GM12878 (cell line): ENCODE measurements at regions of chr9 and their contacts with region 1.

Region 1: DNA sequence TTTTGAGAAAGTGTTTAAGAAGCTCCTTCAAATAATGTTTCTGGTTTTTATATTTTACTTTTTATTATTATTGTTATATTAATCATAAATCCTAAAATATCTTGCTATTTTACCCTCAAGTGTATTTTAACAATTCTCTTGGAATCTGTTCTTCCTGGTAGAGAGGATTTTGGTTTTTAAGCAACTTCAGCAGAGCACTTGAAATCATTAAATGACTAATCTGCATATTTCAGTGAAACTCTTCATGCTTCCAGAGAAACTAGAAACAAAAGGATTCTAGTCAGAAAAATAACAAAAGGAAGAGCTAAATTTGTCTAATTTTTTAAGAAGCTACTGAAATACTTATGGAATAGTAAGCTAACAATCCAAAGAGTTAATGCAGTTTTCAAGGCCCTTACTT is 1057.3 kb downstream of the TLE1 start:
- DNase-seq: no peak
- ATAC-seq: no peak
- H3K4me3 ChIP-seq: no peak overlapping the region
- H3K27ac ChIP-seq: no peak overlapping the region
- H3K4me1 ChIP-seq: no peaks in the 10 kb centered on the region
- H3K27me3 ChIP-seq: no peaks in the 10 kb centered on the region
- CTCF ChIP-seq: no peak
- EP300 ChIP-seq: no peak
- POLR2A ChIP-seq: no peak
- RAD21 ChIP-seq: no peak

Region 2: GRCh38 chr9:80571965-80572364 is 60.1 kb before region 1 on chr9:
- CTCF ChIA-PET with region 1: no interaction called
- POLR2A ChIA-PET with region 1: no interaction called
- RAD21 ChIA-PET with region 1: no interaction called
- SMC1A ChIA-PET with region 1: no interaction called
- in situ Hi-C with region 1: no loop called
- intact Hi-C with region 1: loop called (anchors 5 kb)
- DNase-seq: no peak
- ATAC-seq: no peak
- H3K4me3 ChIP-seq: no peak overlapping the region
- H3K27ac ChIP-seq: no peak overlapping the region
- H3K4me1 ChIP-seq: no peaks in the 10 kb centered on the region
- H3K27me3 ChIP-seq: no peaks in the 10 kb centered on the region
- CTCF ChIP-seq: no peak
- EP300 ChIP-seq: no peak
- POLR2A ChIP-seq: no peak
- RAD21 ChIP-seq: no peak

Region 3: DNA sequence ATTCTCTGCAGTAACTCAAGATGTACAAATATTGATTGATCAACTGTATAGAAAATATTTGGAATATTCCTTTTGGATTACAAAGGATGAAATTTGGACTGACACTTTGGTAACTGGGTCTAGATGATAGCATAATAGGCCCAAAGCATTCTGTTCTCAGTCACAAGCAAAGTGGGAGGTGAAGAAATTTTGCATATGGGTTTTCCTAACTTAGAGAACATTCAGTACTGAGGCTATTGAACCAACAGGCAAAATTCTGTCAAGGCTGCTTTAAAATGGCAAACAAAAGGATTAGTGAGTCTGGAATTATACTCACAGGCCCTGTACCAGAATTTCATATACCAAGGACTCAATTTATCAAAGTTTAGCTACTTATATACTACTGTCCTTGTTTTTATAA is 39.6 kb before region 1 on chr9:
- CTCF ChIA-PET with region 1: interaction called, 4 read pairs
- POLR2A ChIA-PET with region 1: no interaction called
- RAD21 ChIA-PET with region 1: no interaction called
- SMC1A ChIA-PET with region 1: no interaction called
- in situ Hi-C with region 1: no loop called
- intact Hi-C with region 1: loop called (anchors 5 kb)
- DNase-seq: no peak
- ATAC-seq: no peak
- H3K4me3 ChIP-seq: no peak overlapping the region
- H3K27ac ChIP-seq: no peak overlapping the region
- H3K4me1 ChIP-seq: no peaks in the 10 kb centered on the region
- H3K27me3 ChIP-seq: no peaks in the 10 kb centered on the region
- CTCF ChIP-seq: no peak
- EP300 ChIP-seq: no peak
- POLR2A ChIP-seq: no peak
- RAD21 ChIP-seq: no peak